ENCODE measurements at regions of chr9 and their contacts with region 1.

Region 1: GRCh38 chr9:94563548-94563947 is 8.7 kb downstream of the PCAT7 start:
- DNase-seq: no peak
- H3K4me3 ChIP-seq: no peak overlapping the region
- H3K27ac ChIP-seq: no peak overlapping the region
- H3K4me1 ChIP-seq: no peaks in the 10 kb centered on the region
- H3K27me3 ChIP-seq: no peaks in the 10 kb centered on the region
- CTCF ChIP-seq: no peak
- EP300 ChIP-seq: no peak
- POLR2A ChIP-seq: no peak
- RAD21 ChIP-seq: no peak

Region 2: GRCh38 chr9:94534901-94535300 is 28.6 kb before region 1 on chr9:
- CTCF ChIA-PET with region 1: no interaction called
- POLR2A ChIA-PET with region 1: no interaction called
- DNase-seq: no peak
- H3K4me3 ChIP-seq: no peak overlapping the region
- H3K27ac ChIP-seq: no peak overlapping the region
- H3K4me1 ChIP-seq: no peaks in the 10 kb centered on the region
- H3K27me3 ChIP-seq: no peaks in the 10 kb centered on the region
- CTCF ChIP-seq: no peak
- EP300 ChIP-seq: no peak
- POLR2A ChIP-seq: no peak
- RAD21 ChIP-seq: no peak

Region 3: DNA sequence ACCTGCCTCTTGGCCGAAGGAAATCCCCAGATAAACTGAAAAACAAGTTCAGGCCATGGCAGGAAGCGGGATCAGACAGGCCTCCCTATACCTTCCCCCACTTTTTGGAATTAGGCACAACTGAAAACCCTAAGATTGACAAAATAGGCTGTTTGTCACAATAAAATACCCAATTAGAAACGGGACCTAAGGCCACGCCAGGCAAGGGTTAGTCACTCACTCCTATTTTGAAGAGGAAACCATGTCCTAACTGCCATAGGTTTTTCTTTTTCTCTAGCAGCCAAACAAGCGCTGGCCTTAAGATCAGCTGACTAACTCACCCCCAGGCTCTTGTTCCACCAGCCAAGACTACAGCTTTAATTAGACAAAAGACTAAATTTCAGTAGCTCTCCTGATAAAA is 18.2 kb after region 1 on chr9:
- CTCF ChIA-PET with region 1: interaction called, 3 read pairs
- POLR2A ChIA-PET with region 1: interaction called, 17 read pairs
- DNase-seq: no peak
- H3K4me3 ChIP-seq: no peak overlapping the region
- H3K27ac ChIP-seq: no peak overlapping the region
- H3K4me1 ChIP-seq: no peaks in the 10 kb centered on the region
- H3K27me3 ChIP-seq: no peaks in the 10 kb centered on the region
- CTCF ChIP-seq: no peak
- EP300 ChIP-seq: no peak
- POLR2A ChIP-seq: no peak
- RAD21 ChIP-seq: no peak